CD8-positive, alpha-beta T cell (primary cell): ENCODE measurements at regions of chr5 and their contacts with region 1.

Region 1: DNA sequence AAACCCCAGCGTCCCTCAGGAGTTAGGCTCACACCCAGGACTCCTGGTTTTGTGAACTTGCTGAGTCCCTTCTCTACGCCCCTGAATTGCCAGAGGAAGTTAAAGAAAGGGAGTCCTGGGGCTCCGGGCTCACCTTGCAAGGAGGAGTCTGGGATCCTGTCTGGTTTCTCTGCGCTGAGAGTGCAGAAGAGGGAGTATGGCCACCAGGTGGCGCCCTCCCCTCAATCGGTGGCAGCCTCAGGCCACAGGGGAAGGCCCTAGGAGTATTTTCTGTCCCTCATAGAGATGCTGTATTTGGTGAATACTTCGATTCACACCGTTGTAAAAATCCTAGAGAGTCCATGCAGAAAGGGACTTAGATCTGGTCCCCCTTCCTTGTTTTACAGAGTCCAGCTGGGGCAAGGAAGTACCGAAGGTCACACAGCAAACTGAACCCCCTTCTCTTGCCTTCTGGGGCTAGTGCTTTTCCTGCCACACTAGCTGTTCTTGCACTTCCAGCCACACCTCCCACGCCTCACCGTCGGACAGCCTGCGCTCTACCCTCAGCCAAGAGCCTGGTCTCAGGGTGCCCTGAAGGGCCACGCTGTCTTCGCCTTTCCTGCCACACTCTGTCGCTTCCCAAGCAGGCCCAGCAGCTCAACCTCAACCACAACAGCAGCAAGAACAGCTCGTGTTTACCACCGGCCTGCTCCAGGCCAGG is 10.2 kb downstream of the HAND1 start:
- DNase-seq: peak; percentile 39 to 80 (median 74)
- ATAC-seq: peak; percentile 80
- H3K4me3 ChIP-seq: no peak overlapping the region
- H3K4me3 Mint-ChIP-seq: no peak overlapping the region
- H3K27ac ChIP-seq: no peak overlapping the region
- H3K27ac Mint-ChIP-seq: no peak overlapping the region
- H3K4me1 ChIP-seq: no peaks in the 10 kb centered on the region
- H3K4me1 Mint-ChIP-seq: peaks cover 9% of the 10 kb centered on the region
- H3K27me3 ChIP-seq: peaks cover 9 to 14% of the 10 kb centered on the region in 2 experiments
- H3K27me3 Mint-ChIP-seq: peaks cover 36% of the 10 kb centered on the region
- CTCF ChIP-seq: peak; percentile 81

Region 2: DNA sequence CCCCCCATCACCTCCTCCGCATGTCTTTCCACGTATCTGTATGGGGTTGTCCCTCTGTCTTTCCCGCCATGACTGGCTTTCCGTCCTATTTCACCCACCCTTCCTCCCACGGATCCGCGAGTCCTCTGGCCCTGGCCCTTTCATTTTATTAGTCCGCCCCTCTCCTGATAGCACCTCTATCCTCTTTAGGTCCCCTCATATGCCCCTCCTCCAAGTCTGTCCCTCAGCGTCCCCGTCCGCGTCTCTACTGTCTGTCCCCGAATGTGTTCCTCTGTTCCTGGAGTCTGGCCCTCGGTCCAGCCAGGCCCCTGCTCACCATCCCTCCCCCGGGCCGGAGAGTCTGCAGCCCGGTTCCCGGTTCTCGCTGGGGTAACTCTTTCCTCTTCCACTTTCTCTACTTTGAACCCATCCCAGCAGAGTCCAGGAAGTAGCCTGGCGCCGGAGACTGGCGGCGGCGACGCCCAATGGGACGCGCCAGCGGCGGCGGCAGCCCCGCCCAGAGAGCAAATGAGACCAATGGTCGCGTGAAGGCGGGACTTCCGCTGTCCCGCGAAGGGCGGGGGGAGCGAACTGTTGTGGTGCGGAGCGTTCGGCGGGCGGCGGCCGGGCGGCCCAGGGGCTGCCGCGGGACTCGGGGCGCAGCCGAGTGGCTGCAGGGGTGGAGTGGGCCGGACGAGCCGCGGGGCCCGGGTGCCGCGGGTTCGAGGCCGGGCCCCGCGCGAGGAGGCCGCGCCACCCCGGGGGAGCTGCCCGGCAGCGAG is 22.2 kb before region 1 on chr5 and contains the start of gene SAP30L:
- CTCF ChIA-PET with region 1: interaction called, 20 read pairs
- POLR2A ChIA-PET with region 1: no interaction called
- intact Hi-C with region 1: no loop called
- DNase-seq: peak; percentile 92 to 98 (median 95)
- ATAC-seq: peak; percentile 93
- H3K4me3 ChIP-seq: peak within 1 kb of the TSS; percentile 98 to 100
- H3K4me3 Mint-ChIP-seq: peak within 1 kb of the TSS; percentile 98
- H3K27ac ChIP-seq: peak within 1 kb of the TSS; percentile 77 to 79
- H3K27ac Mint-ChIP-seq: peak within 1 kb of the TSS; percentile 96
- H3K4me1 ChIP-seq: peaks cover 40% of the 10 kb centered on the region
- H3K4me1 Mint-ChIP-seq: peaks cover 64% of the 10 kb centered on the region
- H3K27me3 ChIP-seq: no peaks in the 10 kb centered on the region
- H3K27me3 Mint-ChIP-seq: no peaks in the 10 kb centered on the region
- CTCF ChIP-seq: no peak
- total RNA-seq, gene SAP30L: 24.1 to 25.4 TPM

Region 3: DNA sequence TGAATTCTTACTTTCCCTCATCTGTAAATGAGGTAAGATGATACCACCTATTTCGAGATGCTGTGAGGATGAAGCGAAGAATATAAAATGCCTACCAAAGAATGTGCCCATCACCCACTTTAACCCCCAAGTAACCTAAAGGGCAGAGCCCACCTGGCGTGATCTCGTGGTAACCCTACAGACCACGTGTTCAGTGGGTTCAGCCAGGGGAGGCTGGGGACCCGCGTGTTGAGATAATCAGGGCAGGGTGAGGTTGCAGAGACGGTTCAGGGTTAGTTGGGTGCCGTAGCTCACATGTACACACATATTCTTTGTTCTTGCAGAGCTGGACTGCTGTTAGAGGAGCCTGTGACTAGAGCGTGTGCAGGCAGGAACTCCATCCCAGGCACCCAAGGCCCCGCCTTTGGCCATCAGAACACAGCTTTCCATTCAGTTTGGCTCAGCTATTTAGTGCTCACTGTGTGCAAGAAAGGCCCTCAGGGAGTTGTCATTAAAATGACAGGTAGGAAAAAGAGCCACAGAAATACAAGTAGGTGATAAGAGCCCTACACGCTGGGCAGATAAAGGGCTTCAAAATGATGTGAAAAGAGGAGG is 66.7 kb after region 1 on chr5:
- CTCF ChIA-PET with region 1: no interaction called
- POLR2A ChIA-PET with region 1: no interaction called
- intact Hi-C with region 1: no loop called
- DNase-seq: peak in 1 of 9 experiments; percentile 29
- ATAC-seq: no peak
- H3K4me3 ChIP-seq: no peak overlapping the region
- H3K4me3 Mint-ChIP-seq: no peak overlapping the region
- H3K27ac ChIP-seq: no peak overlapping the region
- H3K27ac Mint-ChIP-seq: no peak overlapping the region
- H3K4me1 ChIP-seq: no peaks in the 10 kb centered on the region
- H3K4me1 Mint-ChIP-seq: no peaks in the 10 kb centered on the region
- H3K27me3 ChIP-seq: peaks cover 0 to 4% of the 10 kb centered on the region in 2 experiments
- H3K27me3 Mint-ChIP-seq: peaks cover 13% of the 10 kb centered on the region
- CTCF ChIP-seq: no peak

Region 4: GRCh38 chr5:154610321-154611154 is 142.7 kb after region 1 on chr5:
- CTCF ChIA-PET with region 1: interaction called, 3 read pairs
- POLR2A ChIA-PET with region 1: no interaction called
- intact Hi-C with region 1: loop called in 1 of 2 experiments (anchors 1 kb)
- DNase-seq: peak in 8 of 9 experiments; percentile 5 to 62 (median 42)
- ATAC-seq: peak; percentile 58
- H3K4me3 ChIP-seq: peak overlapping the region in 1 of 2 experiments; percentile 37
- H3K4me3 Mint-ChIP-seq: peak overlapping the region; percentile 15
- H3K27ac ChIP-seq: no peak overlapping the region
- H3K27ac Mint-ChIP-seq: no peak overlapping the region
- H3K4me1 ChIP-seq: peaks cover 9% of the 10 kb centered on the region
- H3K4me1 Mint-ChIP-seq: peaks cover 16% of the 10 kb centered on the region
- H3K27me3 ChIP-seq: peaks cover 0 to 16% of the 10 kb centered on the region in 2 experiments
- H3K27me3 Mint-ChIP-seq: peaks cover 47% of the 10 kb centered on the region
- CTCF ChIP-seq: peak; percentile 32

Region 5: GRCh38 chr5:154811653-154812365 is 344.0 kb after region 1 on chr5:
- CTCF ChIA-PET with region 1: no interaction called
- POLR2A ChIA-PET with region 1: no interaction called
- intact Hi-C with region 1: loop called in 1 of 2 experiments (anchors 5 kb)
- DNase-seq: peak; percentile 40 to 77 (median 69)
- ATAC-seq: peak; percentile 69
- H3K4me3 ChIP-seq: no peak overlapping the region
- H3K4me3 Mint-ChIP-seq: no peak overlapping the region
- H3K27ac ChIP-seq: no peak overlapping the region
- H3K27ac Mint-ChIP-seq: peak overlapping the region; percentile 66
- H3K4me1 ChIP-seq: peaks cover 26% of the 10 kb centered on the region
- H3K4me1 Mint-ChIP-seq: peaks cover 33% of the 10 kb centered on the region
- H3K27me3 ChIP-seq: no peaks in the 10 kb centered on the region
- H3K27me3 Mint-ChIP-seq: no peaks in the 10 kb centered on the region
- CTCF ChIP-seq: peak; percentile 95